ENCODE measurements at regions of chr3 and their contacts with region 1.

Region 1: DNA sequence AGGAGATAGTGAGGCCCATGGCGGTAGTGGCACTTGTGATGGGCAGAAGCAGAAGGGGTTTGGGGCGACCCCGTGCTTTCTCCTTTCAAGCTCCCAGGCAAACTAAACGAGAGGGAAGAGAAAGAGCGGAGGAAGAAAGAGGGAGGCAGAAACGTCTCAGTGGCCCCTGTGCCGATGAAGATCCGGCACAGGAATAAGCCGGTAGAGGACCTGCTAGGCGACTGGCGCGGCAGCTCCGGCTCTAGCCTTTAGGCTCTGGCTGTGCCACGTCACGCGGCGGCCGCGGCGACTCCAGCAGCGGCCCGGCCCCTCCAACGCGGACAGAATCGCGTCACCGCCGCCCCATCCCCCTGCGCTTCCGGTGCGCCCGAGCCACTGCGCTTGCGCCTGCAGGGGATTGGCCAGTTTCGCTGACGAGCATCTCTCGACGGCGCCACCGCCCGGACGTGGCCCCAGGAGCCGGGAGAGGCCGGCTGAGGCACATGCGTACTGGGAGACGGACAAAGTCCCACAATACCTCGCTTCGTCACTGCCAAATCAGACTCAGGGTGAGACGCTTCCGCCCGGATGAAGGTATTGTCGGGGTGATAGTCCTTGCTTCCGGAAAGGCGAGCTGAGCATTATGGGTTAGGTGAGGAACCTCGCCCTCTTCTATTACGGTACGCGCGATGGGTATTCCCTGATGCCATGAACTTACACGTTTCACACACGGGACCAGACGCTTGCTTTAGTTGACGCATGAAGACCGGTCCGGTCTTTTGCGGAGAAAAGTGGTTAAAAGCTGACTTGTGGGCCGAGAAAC is at the start of gene ARF4:
- DNase-seq: peak; percentile 99
- H3K4me3 ChIP-seq: peak within 1 kb of the TSS; percentile 90
- H3K4me3 Mint-ChIP-seq: peak within 1 kb of the TSS; percentile 84
- H3K27ac Mint-ChIP-seq: peak within 1 kb of the TSS; percentile 93
- H3K4me1 ChIP-seq: peaks cover 21% of the 10 kb centered on the region
- H3K4me1 Mint-ChIP-seq: peaks cover 22% of the 10 kb centered on the region
- H3K27me3 ChIP-seq: no peaks in the 10 kb centered on the region
- H3K27me3 Mint-ChIP-seq: no peaks in the 10 kb centered on the region
- CTCF ChIP-seq: peak in 1 of 2 experiments; percentile 16
- total RNA-seq, gene ARF4: 194 and 204 TPM in 2 replicates

Region 2: DNA sequence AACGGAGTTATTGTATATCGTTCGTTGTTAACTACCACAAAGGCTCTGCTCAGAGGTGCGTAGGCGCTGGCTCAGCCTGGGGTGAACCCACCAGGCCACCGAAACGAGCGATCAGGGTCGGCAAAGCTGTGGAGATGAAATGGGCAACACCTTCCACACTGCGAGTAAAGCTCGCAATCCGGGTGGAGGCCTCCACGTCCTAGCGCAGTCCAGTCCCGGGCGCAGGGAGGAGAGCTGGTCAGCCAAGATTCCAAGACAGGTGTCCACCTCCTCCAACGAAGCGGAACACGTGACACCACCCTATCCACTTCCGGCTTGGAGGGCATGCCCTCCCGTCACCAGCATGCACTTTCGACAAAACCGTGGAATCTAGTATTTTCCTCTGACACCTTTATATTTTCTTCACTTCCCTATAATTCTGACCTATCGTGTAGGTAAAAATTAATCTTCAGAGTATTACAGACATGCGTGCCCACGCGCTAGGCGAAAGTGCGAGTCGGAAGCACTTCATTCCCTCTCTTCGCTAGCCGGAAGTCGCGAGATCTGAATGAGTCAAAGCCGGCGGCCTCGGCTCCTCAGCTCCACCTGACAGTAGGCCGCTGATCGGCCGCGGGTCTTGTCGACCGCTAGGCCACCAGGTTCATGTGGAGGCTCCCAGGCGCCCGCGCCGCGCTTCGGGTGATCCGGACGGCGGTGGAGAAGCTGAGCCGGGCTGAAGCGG is 41.4 kb before region 1 on chr3 and contains the start of gene PDE12:
- CTCF ChIA-PET with region 1: interaction called, 5 read pairs
- POLR2A ChIA-PET with region 1: interaction called, 11 read pairs
- intact Hi-C with region 1: loop called (anchors 1 kb)
- DNase-seq: peak; percentile 92 to 94
- H3K4me3 ChIP-seq: peak within 1 kb of the TSS; percentile 71
- H3K4me3 Mint-ChIP-seq: peak within 1 kb of the TSS; percentile 66
- H3K27ac Mint-ChIP-seq: peak within 1 kb of the TSS; percentile 89
- H3K4me1 ChIP-seq: peaks cover 4% of the 10 kb centered on the region; the same call in 1 of the 2 replicates
- H3K4me1 Mint-ChIP-seq: no peaks in the 10 kb centered on the region
- H3K27me3 ChIP-seq: no peaks in the 10 kb centered on the region
- H3K27me3 Mint-ChIP-seq: no peaks in the 10 kb centered on the region
- CTCF ChIP-seq: no peak
- total RNA-seq, gene PDE12: 22.1 and 23.2 TPM in 2 replicates

Region 3: GRCh38 chr3:57692259-57693147 is 95.2 kb after region 1 on chr3 and contains the start of gene DENND6A:
- CTCF ChIA-PET with region 1: no interaction called
- POLR2A ChIA-PET with region 1: interaction called, 3 read pairs
- intact Hi-C with region 1: loop called (anchors 2 kb)
- DNase-seq: peak; percentile 96
- H3K4me3 ChIP-seq: peak within 1 kb of the TSS; percentile 60
- H3K4me3 Mint-ChIP-seq: peak within 1 kb of the TSS; percentile 82
- H3K27ac Mint-ChIP-seq: peak within 1 kb of the TSS; percentile 77
- H3K4me1 ChIP-seq: peaks cover 13% of the 10 kb centered on the region; the same call in 1 of the 2 replicates
- H3K4me1 Mint-ChIP-seq: peaks cover 6% of the 10 kb centered on the region
- H3K27me3 ChIP-seq: no peaks in the 10 kb centered on the region
- H3K27me3 Mint-ChIP-seq: no peaks in the 10 kb centered on the region
- CTCF ChIP-seq: no peak
- total RNA-seq, gene DENND6A: 20.6 and 21.8 TPM in 2 replicates

Region 4: GRCh38 chr3:57826952-57827723 is 229.8 kb after region 1 on chr3:
- CTCF ChIA-PET with region 1: no interaction called
- POLR2A ChIA-PET with region 1: interaction called, 3 read pairs
- intact Hi-C with region 1: loop called (anchors 1 kb)
- DNase-seq: peak; percentile 65 to 77
- H3K4me3 ChIP-seq: no peak overlapping the region
- H3K4me3 Mint-ChIP-seq: peak overlapping the region; percentile 7
- H3K27ac Mint-ChIP-seq: peak overlapping the region; percentile 93
- H3K4me1 ChIP-seq: peaks cover 63% of the 10 kb centered on the region
- H3K4me1 Mint-ChIP-seq: peaks cover 48% of the 10 kb centered on the region
- H3K27me3 ChIP-seq: no peaks in the 10 kb centered on the region
- H3K27me3 Mint-ChIP-seq: no peaks in the 10 kb centered on the region
- CTCF ChIP-seq: no peak

Measured in Caco-2 (cell line).